Activated CD4-positive, alpha-beta T cell treated with anti-CD3 and anti-CD28 coated beads, Interleukin-2, amount 10 ng/mL, durations not matched to agents 7 days and 5 days (primary cell): ENCODE measurements at regions of chr10 and their contacts with region 1.

Region 1: DNA sequence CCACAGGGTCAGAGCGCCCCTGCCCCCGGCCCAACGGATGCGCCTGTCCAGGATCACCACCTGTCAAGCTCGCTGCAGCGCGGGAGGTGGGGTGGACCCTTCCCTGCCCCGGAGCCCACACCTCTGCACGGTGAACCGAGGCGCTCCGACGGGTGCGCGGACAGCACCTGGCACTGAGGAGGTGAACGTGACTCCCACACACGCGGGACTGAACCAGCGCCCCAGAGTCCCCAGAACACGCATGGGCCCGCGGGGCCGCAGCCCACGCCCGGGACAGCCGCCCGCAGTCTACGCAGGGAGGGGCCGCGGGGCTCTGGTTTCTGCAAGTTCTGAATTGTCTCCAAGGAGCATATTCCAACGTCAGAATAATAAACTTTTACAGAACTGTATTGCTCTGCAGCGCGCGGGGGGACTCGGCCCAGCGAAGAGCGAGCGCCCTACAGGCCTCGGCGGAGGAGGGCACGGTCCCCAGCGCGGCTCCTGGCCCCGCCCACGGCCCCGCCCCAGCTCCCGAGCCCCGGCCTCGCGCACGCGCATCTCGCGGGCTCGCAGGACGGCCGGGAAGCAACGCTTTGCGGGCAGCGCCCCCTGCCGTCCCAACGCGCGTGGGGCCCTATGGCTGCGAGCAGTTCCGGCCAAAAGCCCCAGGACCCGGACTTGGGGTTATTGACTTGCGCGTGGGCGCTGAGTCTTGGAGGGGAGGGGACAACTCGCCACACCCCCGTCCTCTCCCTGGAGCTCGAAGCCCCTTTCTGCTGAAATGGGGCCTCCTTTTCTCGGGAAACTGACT is 29.7 kb downstream of the OAT start:
- DNase-seq: peak; percentile 89
- H3K4me3 Mint-ChIP-seq: peak overlapping the region; percentile 22
- H3K27ac Mint-ChIP-seq: peak overlapping the region; percentile 57
- H3K4me1 Mint-ChIP-seq: peaks cover 6% of the 10 kb centered on the region
- H3K27me3 Mint-ChIP-seq: no peaks in the 10 kb centered on the region

Region 2: DNA sequence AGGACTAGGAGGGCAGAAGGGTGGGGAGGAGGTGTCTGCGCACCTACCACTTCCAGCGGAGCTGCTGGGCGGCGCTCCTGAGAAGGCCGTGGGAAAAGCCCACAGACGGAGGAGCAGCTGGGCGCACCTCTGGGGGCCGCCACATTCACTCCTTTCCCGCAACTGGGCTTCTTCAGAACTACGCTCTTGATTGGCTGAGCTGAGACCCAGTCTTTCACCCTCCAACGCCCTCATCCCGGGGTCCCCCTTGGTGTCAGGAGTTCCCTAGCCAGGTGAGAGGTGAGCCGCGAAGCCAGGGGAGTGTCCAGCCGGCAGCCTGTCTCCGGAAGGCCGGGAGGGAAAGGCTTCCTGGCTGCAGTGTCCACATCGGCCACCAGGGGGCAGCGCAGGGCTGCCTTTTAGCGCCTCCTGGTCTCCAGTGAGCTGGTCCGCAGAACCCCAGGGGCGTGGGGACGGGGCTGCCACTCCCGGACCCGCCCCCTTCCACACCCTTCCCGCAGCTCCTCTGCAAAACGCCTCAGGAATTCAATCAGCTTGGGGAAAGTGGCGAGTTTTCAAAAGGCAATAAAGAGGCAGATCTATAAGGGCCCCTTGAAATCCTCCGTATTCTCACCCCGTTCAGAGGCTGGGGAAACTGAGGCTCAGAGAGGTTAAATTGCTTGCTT is 394.5 kb before region 1 on chr10:
- CTCF ChIA-PET with region 1: interaction called, 71 read pairs
- POLR2A ChIA-PET with region 1: no interaction called
- DNase-seq: peak; percentile 75
- H3K4me3 Mint-ChIP-seq: no peak overlapping the region
- H3K27ac Mint-ChIP-seq: no peak overlapping the region
- H3K4me1 Mint-ChIP-seq: peaks cover 9% of the 10 kb centered on the region
- H3K27me3 Mint-ChIP-seq: peaks cover 57% of the 10 kb centered on the region

Region 3: GRCh38 chr10:124372899-124373298 is 16.1 kb before region 1 on chr10:
- CTCF ChIA-PET with region 1: interaction called, 10 read pairs
- POLR2A ChIA-PET with region 1: no interaction called
- DNase-seq: no peak
- H3K4me3 Mint-ChIP-seq: no peak overlapping the region
- H3K27ac Mint-ChIP-seq: peak overlapping the region; percentile 4
- H3K4me1 Mint-ChIP-seq: no peaks in the 10 kb centered on the region
- H3K27me3 Mint-ChIP-seq: peaks cover 9% of the 10 kb centered on the region

Region 4: DNA sequence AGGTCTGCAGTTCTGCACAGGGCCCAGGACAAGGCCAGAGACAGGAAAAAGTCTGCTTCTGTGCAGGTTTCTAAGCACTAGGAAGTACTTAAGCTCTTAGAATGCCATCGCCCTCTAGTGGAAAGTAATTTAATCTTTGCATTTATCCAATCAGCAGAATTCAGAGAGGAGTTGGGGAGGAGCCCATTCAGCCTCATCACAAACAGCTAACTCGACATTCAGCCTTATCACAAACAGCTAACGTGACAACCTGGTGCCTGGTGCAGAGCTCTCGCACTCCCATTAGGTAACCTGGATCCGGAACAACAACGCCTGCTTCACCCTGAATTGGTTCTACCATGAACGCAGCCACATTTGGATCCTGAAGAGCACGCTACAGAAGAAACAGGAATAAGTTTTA is 14.5 kb after region 1 on chr10:
- CTCF ChIA-PET with region 1: interaction called, 23 read pairs
- POLR2A ChIA-PET with region 1: no interaction called
- DNase-seq: peak; percentile 59
- H3K4me3 Mint-ChIP-seq: no peak overlapping the region
- H3K27ac Mint-ChIP-seq: peak overlapping the region; percentile 82
- H3K4me1 Mint-ChIP-seq: peaks cover 12% of the 10 kb centered on the region
- H3K27me3 Mint-ChIP-seq: no peaks in the 10 kb centered on the region

Region 5: DNA sequence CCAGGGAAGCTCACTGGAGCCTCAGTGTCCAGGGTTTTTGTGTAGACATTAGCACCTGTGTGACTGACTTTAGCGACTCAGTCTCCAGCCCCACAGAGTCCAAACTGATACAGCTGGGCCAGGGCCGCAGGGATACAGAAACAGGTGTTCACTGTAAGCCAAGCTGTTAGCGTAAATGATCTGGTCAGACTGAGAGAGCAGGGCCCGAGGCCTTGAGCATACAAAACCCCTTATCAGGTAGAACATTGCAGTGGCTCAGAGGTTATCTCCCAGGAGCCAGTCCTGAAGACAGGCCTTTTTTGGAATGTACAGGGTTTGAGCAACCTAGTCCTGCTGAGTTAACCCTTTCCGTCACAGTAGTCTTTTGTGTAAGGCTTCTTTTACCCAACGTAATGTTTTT is 97.6 kb after region 1 on chr10:
- CTCF ChIA-PET with region 1: no interaction called
- POLR2A ChIA-PET with region 1: no interaction called
- DNase-seq: no peak
- H3K4me3 Mint-ChIP-seq: no peak overlapping the region
- H3K27ac Mint-ChIP-seq: no peak overlapping the region
- H3K4me1 Mint-ChIP-seq: no peaks in the 10 kb centered on the region
- H3K27me3 Mint-ChIP-seq: no peaks in the 10 kb centered on the region